AG04450 (cell line): ENCODE measurements at regions of chr14 and their contacts with region 1.

Region 1: DNA sequence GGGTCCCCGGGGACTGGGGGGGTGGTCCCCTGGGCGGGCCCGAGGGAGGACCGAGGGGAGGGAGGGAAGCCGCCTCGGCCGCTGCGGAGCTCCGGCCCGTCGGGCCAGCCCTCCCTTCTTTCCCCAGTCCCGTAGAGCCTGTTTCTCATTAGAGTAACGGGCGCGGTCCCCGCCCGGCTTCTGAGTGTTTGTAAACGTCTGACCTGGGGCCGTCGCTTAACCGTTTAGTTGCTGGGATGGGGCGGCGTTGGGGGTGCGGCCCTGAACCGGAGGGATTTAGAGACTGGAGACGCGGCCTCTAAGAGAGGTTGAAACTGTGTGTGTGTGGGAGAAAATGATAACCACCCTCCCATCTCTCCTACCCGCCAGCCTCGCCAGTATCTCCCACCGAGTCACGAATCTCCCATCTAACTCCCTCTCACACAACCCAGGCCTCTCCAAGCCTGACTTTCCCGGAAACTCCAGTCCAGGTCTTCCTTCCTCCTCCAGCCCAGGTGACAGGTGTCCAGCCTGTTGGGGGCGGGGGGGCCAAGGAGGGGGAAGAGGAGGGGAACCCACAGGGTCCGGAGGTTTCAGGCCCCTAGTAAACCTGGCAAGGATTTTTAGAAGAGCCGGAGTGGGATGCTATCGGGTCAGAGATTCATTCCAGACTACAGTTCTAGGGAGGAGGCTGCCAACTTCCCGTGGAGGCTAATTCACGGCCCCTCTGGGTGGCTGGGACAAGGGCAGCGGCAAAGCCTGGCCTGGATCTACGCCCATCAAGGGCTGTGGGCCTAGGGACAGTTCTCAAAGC is 1.1 kb upstream of the NFATC4 start:
- DNase-seq: peak; percentile 83
- H3K4me3 ChIP-seq: peak overlapping the region; percentile 46
- H3K27ac ChIP-seq: peak overlapping the region; percentile 96
- H3K27me3 ChIP-seq: no peaks in the 10 kb centered on the region
- CTCF ChIP-seq: no peak

Region 2: GRCh38 chr14:23209651-23210423 is 1157.1 kb before region 1 on chr14:
- CTCF ChIA-PET with region 1: no interaction called
- POLR2A ChIA-PET with region 1: no interaction called
- DNase-seq: no peak
- H3K4me3 ChIP-seq: no peak overlapping the region
- H3K27ac ChIP-seq: no peak overlapping the region
- H3K27me3 ChIP-seq: peaks cover 11% of the 10 kb centered on the region
- CTCF ChIP-seq: no peak

Region 3: GRCh38 chr14:24310646-24311604 is 56.0 kb before region 1 on chr14 and contains the start of gene LTB4R:
- CTCF ChIA-PET with region 1: interaction called, 12 read pairs
- POLR2A ChIA-PET with region 1: no interaction called
- DNase-seq: no peak
- H3K4me3 ChIP-seq: peak within 1 kb of the TSS; percentile 20; the same call in 1 of the 2 replicates
- H3K27ac ChIP-seq: no peak within 1 kb of the TSS
- H3K27me3 ChIP-seq: peaks cover 2% of the 10 kb centered on the region
- CTCF ChIP-seq: peak; percentile 12; the same call in 1 of the 2 replicates
- polyA plus RNA-seq, gene LTB4R: 0.98 and 1.2 TPM in 2 replicates

Region 4: DNA sequence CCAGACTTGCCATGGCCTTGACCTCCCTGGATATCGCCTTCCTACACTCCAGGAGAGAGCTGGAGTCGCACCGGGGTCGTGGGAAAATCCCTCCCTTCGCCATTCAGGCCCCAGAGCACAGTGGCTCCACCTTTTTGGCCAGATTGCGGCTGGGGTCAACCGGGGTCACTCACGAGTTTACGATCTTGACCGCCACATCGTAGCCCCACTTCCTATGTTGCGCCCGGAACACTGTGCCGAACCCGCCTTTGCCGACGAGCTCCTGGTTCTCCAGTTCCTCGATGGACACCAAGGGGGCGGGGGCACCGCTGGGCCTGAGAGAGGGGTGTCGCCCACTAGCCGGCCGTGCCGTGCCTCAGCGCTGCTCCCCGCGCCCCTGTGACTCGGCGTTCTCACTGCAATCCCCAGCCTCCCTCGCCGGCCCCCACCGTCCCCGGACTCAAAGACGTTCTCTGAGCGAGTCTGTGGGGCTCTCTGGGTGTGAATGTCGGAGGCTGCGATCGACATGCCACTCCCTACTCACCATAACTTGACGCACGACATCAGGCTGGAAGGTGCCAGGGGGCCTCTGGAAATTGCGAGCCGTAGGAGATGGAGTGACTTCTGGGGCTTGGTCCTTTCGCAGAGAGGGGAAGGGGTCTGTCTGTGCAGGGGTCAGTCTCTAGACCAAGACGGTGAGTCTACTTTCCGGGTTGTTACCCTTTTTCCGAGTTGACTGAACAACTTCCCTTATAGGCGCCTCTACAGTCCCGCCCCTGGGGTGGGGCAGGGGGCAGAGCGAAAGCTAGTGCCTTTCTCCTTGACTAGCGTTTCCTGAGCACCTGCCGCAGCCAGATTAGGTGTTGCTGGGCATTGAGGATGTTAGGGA is 27.4 kb before region 1 on chr14 and contains the start of gene RIPK3:
- CTCF ChIA-PET with region 1: interaction called, 65 read pairs
- POLR2A ChIA-PET with region 1: no interaction called
- DNase-seq: no peak
- H3K4me3 ChIP-seq: no peak within 1 kb of the TSS
- H3K27ac ChIP-seq: no peak within 1 kb of the TSS
- H3K27me3 ChIP-seq: peaks cover 74% of the 10 kb centered on the region
- CTCF ChIP-seq: no peak
- polyA plus RNA-seq, gene RIPK3: 0.09 TPM in 1 of 2 replicates, not detected in the other

Region 5: GRCh38 chr14:24351517-24351916 is 15.4 kb before region 1 on chr14:
- CTCF ChIA-PET with region 1: interaction called, 25 read pairs
- POLR2A ChIA-PET with region 1: no interaction called
- DNase-seq: no peak
- H3K4me3 ChIP-seq: no peak overlapping the region
- H3K27ac ChIP-seq: no peak overlapping the region
- H3K27me3 ChIP-seq: peaks cover 32% of the 10 kb centered on the region
- CTCF ChIP-seq: no peak; the same call in 1 of the 2 replicates

Region 6: DNA sequence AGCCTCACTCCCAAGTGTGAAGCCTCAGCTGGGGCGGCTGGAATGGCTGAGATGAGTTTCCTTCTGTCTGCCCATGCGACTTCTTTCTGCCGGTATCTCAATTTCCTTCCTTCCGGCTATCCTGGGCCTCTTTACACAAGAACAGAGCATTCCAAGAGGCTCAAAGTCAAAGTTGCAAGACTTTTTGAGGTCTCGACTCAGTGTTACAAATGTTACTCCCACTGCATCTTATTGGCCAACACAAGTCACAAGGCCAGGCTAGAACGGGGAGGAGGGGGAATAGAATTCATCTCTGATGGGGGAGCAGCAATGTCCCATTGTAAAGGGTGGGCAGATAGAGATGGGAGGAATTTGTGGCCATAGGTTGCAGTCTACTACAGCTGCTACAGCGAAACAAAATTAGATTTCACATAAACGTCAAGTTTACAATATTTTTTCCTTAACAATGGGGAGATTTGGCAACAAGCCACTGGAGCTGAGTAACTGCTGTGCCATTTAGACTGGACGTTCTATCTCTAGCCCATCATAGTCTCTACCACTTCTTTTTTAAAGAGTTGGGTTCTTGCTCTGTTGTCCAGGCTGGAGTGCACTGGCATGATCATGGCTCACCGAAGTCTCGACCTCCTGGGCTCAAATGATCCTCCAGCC is 22.4 kb after region 1 on chr14:
- CTCF ChIA-PET with region 1: interaction called, 10 read pairs
- POLR2A ChIA-PET with region 1: interaction called, 10 read pairs
- DNase-seq: no peak
- H3K4me3 ChIP-seq: no peak overlapping the region
- H3K27ac ChIP-seq: peak overlapping the region; percentile 21
- H3K27me3 ChIP-seq: peaks cover 5% of the 10 kb centered on the region
- CTCF ChIP-seq: no peak

Region 7: GRCh38 chr14:24398653-24399446 is 31.9 kb after region 1 on chr14 and contains the start of gene NYNRIN:
- CTCF ChIA-PET with region 1: interaction called, 12 read pairs
- POLR2A ChIA-PET with region 1: interaction called, 6 read pairs
- DNase-seq: no peak
- H3K4me3 ChIP-seq: peak within 1 kb of the TSS; percentile 66
- H3K27ac ChIP-seq: no peak within 1 kb of the TSS
- H3K27me3 ChIP-seq: no peaks in the 10 kb centered on the region
- CTCF ChIP-seq: no peak
- polyA plus RNA-seq, gene NYNRIN: 10.4 and 10.5 TPM in 2 replicates

Region 8: GRCh38 chr14:24411443-24412389 is 44.8 kb after region 1 on chr14:
- CTCF ChIA-PET with region 1: interaction called, 38 read pairs
- POLR2A ChIA-PET with region 1: interaction called, 5 read pairs
- DNase-seq: no peak
- H3K4me3 ChIP-seq: no peak overlapping the region
- H3K27ac ChIP-seq: no peak overlapping the region
- H3K27me3 ChIP-seq: peaks cover 6% of the 10 kb centered on the region
- CTCF ChIP-seq: peak; percentile 77

Region 9: DNA sequence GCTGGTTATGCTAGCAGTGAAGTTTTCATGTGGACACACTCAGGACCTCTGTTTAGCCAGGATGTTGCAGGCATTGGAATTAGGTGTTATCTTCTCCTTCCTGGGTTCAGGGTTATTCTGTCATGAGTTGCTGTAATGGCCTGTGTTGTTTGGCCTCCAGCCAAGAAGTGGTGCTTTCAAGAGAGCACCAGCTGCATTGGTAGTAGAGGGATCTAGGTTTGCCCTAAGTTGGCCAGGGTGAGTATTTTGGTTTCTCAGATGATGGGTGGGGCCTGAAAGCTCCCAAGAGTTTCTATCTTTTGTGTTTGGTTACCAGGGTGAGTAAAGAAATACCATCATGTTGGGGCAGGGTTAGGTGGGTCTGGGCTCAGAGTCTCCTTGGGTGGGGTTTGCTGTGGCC is 245.3 kb after region 1 on chr14:
- CTCF ChIA-PET with region 1: no interaction called
- POLR2A ChIA-PET with region 1: no interaction called
- DNase-seq: no peak
- H3K4me3 ChIP-seq: no peak overlapping the region
- H3K27ac ChIP-seq: no peak overlapping the region
- H3K27me3 ChIP-seq: no peaks in the 10 kb centered on the region
- CTCF ChIP-seq: no peak